BJ (cell line): ENCODE measurements at regions of chr17 and their contacts with region 1.

Region 1: DNA sequence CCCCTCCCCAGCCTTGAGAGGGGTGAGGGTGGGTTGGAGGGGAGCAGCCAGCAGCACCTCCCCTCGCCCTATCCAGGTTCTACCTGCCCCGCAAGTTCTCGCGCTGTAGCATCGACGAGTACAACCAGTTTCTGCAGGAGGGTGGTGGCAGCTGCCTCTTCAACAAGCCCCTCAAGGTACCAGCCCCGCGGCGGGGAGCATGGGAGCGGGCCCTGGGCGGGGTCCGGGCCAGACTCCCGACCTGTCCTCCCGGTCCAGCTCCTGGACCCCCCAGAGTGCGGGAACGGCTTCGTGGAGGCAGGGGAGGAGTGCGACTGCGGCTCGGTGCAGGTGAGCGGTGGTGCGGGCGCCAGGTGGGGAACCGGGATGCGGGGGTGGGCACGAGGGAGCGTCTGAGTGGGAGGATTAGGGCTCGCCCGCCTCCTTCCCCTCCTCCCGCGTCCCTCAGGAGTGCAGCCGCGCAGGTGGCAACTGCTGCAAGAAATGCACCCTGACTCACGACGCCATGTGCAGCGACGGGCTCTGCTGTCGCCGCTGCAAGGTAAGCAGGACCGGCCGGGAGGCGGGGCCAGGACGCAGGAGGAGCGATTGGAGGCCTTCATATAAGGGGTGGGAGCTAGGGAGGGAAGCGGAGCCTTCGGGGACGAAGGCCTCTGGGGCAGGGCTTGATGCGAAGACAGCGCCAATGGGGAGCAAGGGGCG is 16.5 kb downstream of the ADAM11 start:
- DNase-seq: no peak
- H3K4me3 ChIP-seq: peak overlapping the region; percentile 66
- H3K27me3 ChIP-seq: peaks cover 5% of the 10 kb centered on the region; the same call in 1 of the 2 replicates
- CTCF ChIP-seq: no peak

Region 2: DNA sequence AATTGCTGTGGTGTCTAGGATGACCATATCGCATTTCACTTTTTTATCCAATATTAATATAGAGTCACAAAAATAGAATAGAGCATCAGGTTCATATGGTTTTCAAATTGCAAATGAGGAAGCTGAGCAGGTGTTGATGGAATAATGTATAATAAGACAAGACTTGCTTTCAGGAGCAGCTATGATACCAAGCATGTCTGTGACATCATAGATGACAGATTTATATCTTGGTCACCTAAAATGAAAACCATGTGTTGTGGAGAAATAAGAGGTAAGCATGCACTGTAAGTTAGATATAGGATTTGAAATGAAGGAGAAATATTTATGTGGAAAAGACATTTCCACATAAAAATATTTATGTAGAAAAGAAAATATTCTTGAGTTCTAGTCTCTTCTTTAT is 110.4 kb before region 1 on chr17:
- CTCF ChIA-PET with region 1: no interaction called
- POLR2A ChIA-PET with region 1: no interaction called
- DNase-seq: no peak
- H3K4me3 ChIP-seq: no peak overlapping the region
- H3K27me3 ChIP-seq: no peaks in the 10 kb centered on the region
- CTCF ChIP-seq: no peak

Region 3: GRCh38 chr17:44752953-44753861 is 22.1 kb before region 1 on chr17:
- CTCF ChIA-PET with region 1: interaction called, 13 read pairs
- POLR2A ChIA-PET with region 1: no interaction called
- DNase-seq: no peak
- H3K4me3 ChIP-seq: no peak overlapping the region
- H3K27me3 ChIP-seq: peaks cover 3% of the 10 kb centered on the region; the same call in 1 of the 2 replicates
- CTCF ChIP-seq: no peak

Region 4: GRCh38 chr17:44794851-44795413 is 19.6 kb after region 1 on chr17:
- CTCF ChIA-PET with region 1: interaction called, 24 read pairs
- POLR2A ChIA-PET with region 1: no interaction called
- DNase-seq: peak; percentile 82
- H3K4me3 ChIP-seq: no peak overlapping the region
- H3K27me3 ChIP-seq: no peaks in the 10 kb centered on the region
- CTCF ChIP-seq: no peak

Region 5: GRCh38 chr17:44829523-44830358 is 54.5 kb after region 1 on chr17 and contains the start of gene GJC1:
- CTCF ChIA-PET with region 1: interaction called, 34 read pairs
- POLR2A ChIA-PET with region 1: no interaction called
- DNase-seq: no peak
- H3K4me3 ChIP-seq: peak within 1 kb of the TSS; percentile 83
- H3K27me3 ChIP-seq: no peaks in the 10 kb centered on the region
- CTCF ChIP-seq: no peak
- polyA plus RNA-seq, gene GJC1: 26.5 and 32.2 TPM in 2 replicates

Region 6: GRCh38 chr17:44844390-44844830 is 69.1 kb after region 1 on chr17:
- CTCF ChIA-PET with region 1: interaction called, 39 read pairs
- POLR2A ChIA-PET with region 1: no interaction called
- DNase-seq: no peak
- H3K4me3 ChIP-seq: no peak overlapping the region
- H3K27me3 ChIP-seq: no peaks in the 10 kb centered on the region
- CTCF ChIP-seq: peak; percentile 18; the same call in 1 of the 2 replicates

Region 7: GRCh38 chr17:44878627-44879221 is 103.4 kb after region 1 on chr17:
- CTCF ChIA-PET with region 1: interaction called, 368 read pairs
- POLR2A ChIA-PET with region 1: no interaction called
- DNase-seq: no peak
- H3K4me3 ChIP-seq: no peak overlapping the region
- H3K27me3 ChIP-seq: no peaks in the 10 kb centered on the region
- CTCF ChIP-seq: peak; percentile 67

Region 8: GRCh38 chr17:45021607-45022287 is 246.5 kb after region 1 on chr17:
- CTCF ChIA-PET with region 1: interaction called, 23 read pairs
- POLR2A ChIA-PET with region 1: no interaction called
- DNase-seq: no peak
- H3K4me3 ChIP-seq: peak overlapping the region; percentile 26
- H3K27me3 ChIP-seq: no peaks in the 10 kb centered on the region
- CTCF ChIP-seq: peak; percentile 56